ENCODE measurements at regions of chr14 and their contacts with region 1.

Region 1: GRCh38 chr14:52961060-52961639 is 10.3 kb upstream of the FERMT2 start:
- DNase-seq: peak; percentile 39 to 83
- ATAC-seq: peak; percentile 83 to 97 (median 95)
- H3K4me3 ChIP-seq: no peak overlapping the region
- H3K4me3 Mint-ChIP-seq: no peak overlapping the region
- H3K27ac ChIP-seq: no peak overlapping the region
- H3K27ac Mint-ChIP-seq: no peak overlapping the region
- H3K4me1 ChIP-seq: no peaks in the 10 kb centered on the region
- H3K4me1 Mint-ChIP-seq: peaks cover 4 to 5% of the 10 kb centered on the region in 2 donors
- H3K27me3 ChIP-seq: no peaks in the 10 kb centered on the region
- H3K27me3 Mint-ChIP-seq: no peaks in the 10 kb centered on the region
- CTCF ChIP-seq: peak; percentile 79

Region 2: GRCh38 chr14:52729925-52730667 is 231.1 kb before region 1 on chr14 and contains the start of gene STYX:
- intact Hi-C with region 1: no loop called
- DNase-seq: peak; percentile 96 to 99
- ATAC-seq: peak; percentile 96 to 100 (median 96)
- H3K4me3 ChIP-seq: peak within 1 kb of the TSS; percentile 98
- H3K4me3 Mint-ChIP-seq: peak within 1 kb of the TSS; percentile 93
- H3K27ac ChIP-seq: peak within 1 kb of the TSS; percentile 67
- H3K27ac Mint-ChIP-seq: peak within 1 kb of the TSS; percentile 83 to 93
- H3K4me1 ChIP-seq: peaks cover 12% of the 10 kb centered on the region
- H3K4me1 Mint-ChIP-seq: peaks cover 27 to 28% of the 10 kb centered on the region in 2 donors
- H3K27me3 ChIP-seq: no peaks in the 10 kb centered on the region
- H3K27me3 Mint-ChIP-seq: no peaks in the 10 kb centered on the region
- CTCF ChIP-seq: no peak
- total RNA-seq, gene STYX: 13.3 to 22.9 (median 18.3) TPM

Region 3: GRCh38 chr14:52824507-52824906 is 136.6 kb before region 1 on chr14:
- intact Hi-C with region 1: loop called (anchors 1 kb)
- DNase-seq: no peak
- ATAC-seq: no peak
- H3K4me3 ChIP-seq: no peak overlapping the region
- H3K4me3 Mint-ChIP-seq: no peak overlapping the region
- H3K27ac ChIP-seq: no peak overlapping the region
- H3K27ac Mint-ChIP-seq: no peak overlapping the region
- H3K4me1 ChIP-seq: no peaks in the 10 kb centered on the region
- H3K4me1 Mint-ChIP-seq: no peaks in the 10 kb centered on the region
- H3K27me3 ChIP-seq: no peaks in the 10 kb centered on the region
- H3K27me3 Mint-ChIP-seq: no peaks in the 10 kb centered on the region
- CTCF ChIP-seq: no peak

Region 4: GRCh38 chr14:52923902-52924575 is 37.1 kb before region 1 on chr14:
- intact Hi-C with region 1: loop called (anchors 1 kb)
- DNase-seq: peak in 1 of 2 donors; percentile 11
- ATAC-seq: peak; percentile 62 to 90 (median 81)
- H3K4me3 ChIP-seq: no peak overlapping the region
- H3K4me3 Mint-ChIP-seq: no peak overlapping the region
- H3K27ac ChIP-seq: no peak overlapping the region
- H3K27ac Mint-ChIP-seq: peak overlapping the region; percentile 2 to 10
- H3K4me1 ChIP-seq: peaks cover 17% of the 10 kb centered on the region
- H3K4me1 Mint-ChIP-seq: peaks cover 34 to 36% of the 10 kb centered on the region in 2 donors
- H3K27me3 ChIP-seq: no peaks in the 10 kb centered on the region
- H3K27me3 Mint-ChIP-seq: no peaks in the 10 kb centered on the region
- CTCF ChIP-seq: no peak